ENCODE measurements at regions of chr19 and their contacts with region 1.

Region 1: GRCh38 chr19:5897189-5897969 is 6.2 kb downstream of the NDUFA11 start:
- DNase-seq: no peak
- ATAC-seq: no peak
- H3K4me3 ChIP-seq: no peak overlapping the region
- H3K27ac ChIP-seq: no peak overlapping the region
- H3K4me1 ChIP-seq: peaks cover 0 to 10% (median 3%) of the 10 kb centered on the region in 4 donors
- H3K27me3 ChIP-seq: no peaks in the 10 kb centered on the region
- CTCF ChIP-seq: no peak
- POLR2A ChIP-seq: no peak

Region 2: DNA sequence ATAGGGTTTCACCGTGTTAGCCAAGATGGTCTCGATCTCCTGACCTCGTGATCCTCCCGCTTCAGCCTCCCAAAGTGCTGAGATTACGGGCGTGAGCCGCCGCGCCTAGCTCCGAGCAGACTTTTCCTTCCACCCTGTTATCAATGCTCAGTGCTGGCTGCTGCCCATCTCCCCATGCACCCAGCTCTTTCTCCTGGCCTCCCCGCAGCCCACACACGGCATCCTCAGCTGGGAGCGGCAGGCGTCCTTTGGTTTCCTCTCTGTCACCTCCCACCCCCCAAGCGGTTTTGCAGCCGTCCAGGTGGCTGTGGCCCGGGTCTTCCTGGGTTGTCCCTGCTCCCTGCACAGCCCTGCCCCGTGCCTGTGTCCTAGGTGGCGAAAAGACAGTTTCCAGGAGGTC is 125.0 kb before region 1 on chr19:
- intact Hi-C with region 1: no loop called
- DNase-seq: no peak
- ATAC-seq: no peak
- H3K4me3 ChIP-seq: no peak overlapping the region
- H3K27ac ChIP-seq: no peak overlapping the region
- H3K4me1 ChIP-seq: no peaks in the 10 kb centered on the region
- H3K27me3 ChIP-seq: no peaks in the 10 kb centered on the region
- CTCF ChIP-seq: no peak
- POLR2A ChIP-seq: no peak

Region 3: GRCh38 chr19:5823579-5824281 is 73.6 kb before region 1 on chr19:
- intact Hi-C with region 1: loop called in 1 of 2 experiments (anchors 5 kb)
- DNase-seq: peak in 2 of 3 donors; percentile 63 to 66
- ATAC-seq: peak; percentile 9 to 29 (median 20)
- H3K4me3 ChIP-seq: no peak overlapping the region
- H3K27ac ChIP-seq: no peak overlapping the region
- H3K4me1 ChIP-seq: peaks cover 0 to 18% (median 4%) of the 10 kb centered on the region in 4 donors
- H3K27me3 ChIP-seq: no peaks in the 10 kb centered on the region
- CTCF ChIP-seq: peak; percentile 31 to 45 (median 42)
- POLR2A ChIP-seq: no peak

Measured in right lobe of liver (tissue), 6 donors.